ENCODE measurements at regions of chr3 and their contacts with region 1.

Region 1: DNA sequence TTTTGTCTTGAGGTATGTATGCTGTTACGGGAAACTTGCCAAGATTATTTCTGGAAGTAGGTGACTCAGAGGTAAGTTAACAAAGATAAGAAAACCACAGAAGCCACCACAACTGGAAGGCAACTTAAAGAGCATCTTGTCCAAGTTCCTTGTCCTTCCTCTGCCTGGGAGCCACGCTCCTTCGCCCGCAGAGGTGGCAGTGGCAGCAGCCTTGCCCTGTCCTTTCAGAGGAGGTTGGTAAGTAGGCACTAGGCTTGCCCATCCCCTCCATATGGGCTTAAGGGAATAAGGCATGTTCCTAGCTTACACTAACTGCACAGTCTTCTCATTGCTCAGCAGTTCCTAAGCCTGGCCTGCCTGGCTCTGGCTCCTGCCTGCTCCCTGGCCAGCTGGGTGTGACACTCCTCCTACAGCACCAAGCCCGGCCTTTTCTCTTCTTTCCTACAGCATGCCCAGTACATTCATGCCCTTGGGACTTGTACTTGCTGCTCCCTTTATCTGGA is 48.0 kb upstream of the RAB6B start:
- DNase-seq: peak; percentile 87
- H3K4me3 ChIP-seq: no peak overlapping the region
- H3K27ac ChIP-seq: peak overlapping the region; percentile 88
- H3K4me1 ChIP-seq: peaks cover 66% of the 10 kb centered on the region
- H3K27me3 ChIP-seq: no peaks in the 10 kb centered on the region
- CTCF ChIP-seq: no peak
- POLR2A ChIP-seq: peak; percentile 31

Region 2: DNA sequence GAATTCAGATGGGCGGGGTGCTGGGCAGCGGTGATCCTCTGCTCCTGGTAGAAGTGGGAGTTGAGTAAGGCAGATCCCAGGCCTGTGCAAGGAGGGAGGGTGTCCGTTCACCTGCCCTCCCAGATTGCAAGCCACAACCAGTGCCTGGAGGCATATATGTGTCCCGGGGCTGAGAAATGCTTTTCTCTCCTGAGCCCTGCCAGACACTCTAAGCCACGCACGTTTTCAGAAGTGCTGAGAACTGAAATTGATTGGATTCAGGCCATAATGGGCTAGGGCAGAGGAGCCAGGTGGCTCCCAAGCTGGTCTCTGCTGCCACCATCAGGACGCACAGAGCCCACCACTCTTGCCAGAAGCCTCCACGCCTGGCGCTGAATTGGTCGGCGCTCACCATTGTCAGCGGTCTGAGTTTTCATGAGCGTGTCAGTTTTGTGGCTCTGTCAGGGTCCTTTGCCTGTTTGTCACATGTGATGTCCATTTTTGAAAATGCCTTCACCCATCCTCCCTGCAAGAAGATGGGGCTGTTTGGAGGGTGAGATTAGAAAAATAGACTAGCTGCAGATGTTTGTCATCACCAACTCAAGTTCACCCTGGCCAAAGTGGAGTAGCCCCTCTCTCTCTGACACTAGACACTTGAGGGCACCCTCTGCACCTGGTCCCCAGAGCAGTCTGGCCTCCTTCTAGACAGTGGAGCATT is 559.2 kb before region 1 on chr3:
- CTCF ChIA-PET with region 1: no interaction called
- POLR2A ChIA-PET with region 1: no interaction called
- dilution Hi-C with region 1: no loop called
- intact Hi-C with region 1: no loop called
- DNase-seq: peak; percentile 71
- H3K4me3 ChIP-seq: no peak overlapping the region
- H3K27ac ChIP-seq: no peak overlapping the region
- H3K4me1 ChIP-seq: peaks cover 8% of the 10 kb centered on the region
- H3K27me3 ChIP-seq: peaks cover 0 to 2% of the 10 kb centered on the region in 2 experiments
- CTCF ChIP-seq: peak; percentile 93 to 96
- POLR2A ChIP-seq: no peak

Region 3: GRCh38 chr3:133910422-133910821 is 33.3 kb before region 1 on chr3:
- CTCF ChIA-PET with region 1: no interaction called
- POLR2A ChIA-PET with region 1: no interaction called
- dilution Hi-C with region 1: no loop called
- intact Hi-C with region 1: no loop called
- DNase-seq: no peak
- H3K4me3 ChIP-seq: no peak overlapping the region
- H3K27ac ChIP-seq: no peak overlapping the region
- H3K4me1 ChIP-seq: no peaks in the 10 kb centered on the region
- H3K27me3 ChIP-seq: peaks cover 3% of the 10 kb centered on the region in 2 experiments
- CTCF ChIP-seq: peak in 1 of 2 donors; percentile 6
- POLR2A ChIP-seq: no peak

Region 4: DNA sequence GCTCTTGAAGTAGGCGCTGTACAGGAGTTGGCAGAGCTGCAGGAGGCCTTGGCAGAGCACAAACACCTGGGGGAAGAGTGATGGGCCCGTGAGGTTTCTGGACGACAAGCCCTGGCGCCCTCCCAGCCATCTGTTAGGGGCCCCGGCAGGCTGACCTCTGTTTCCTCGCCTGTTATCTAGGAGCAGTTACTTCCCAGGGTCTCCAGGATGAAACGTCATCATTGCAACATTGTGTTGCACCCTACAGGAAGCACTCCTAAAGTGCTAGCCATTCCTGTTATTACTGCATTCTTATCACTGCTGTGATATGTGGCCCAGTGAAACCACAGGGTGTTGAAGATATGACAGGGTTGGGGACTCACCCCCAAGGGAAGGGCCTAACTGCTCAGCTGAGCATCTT is 35.9 kb after region 1 on chr3:
- CTCF ChIA-PET with region 1: interaction called, 3 read pairs
- POLR2A ChIA-PET with region 1: interaction called, 3 read pairs
- dilution Hi-C with region 1: no loop called
- intact Hi-C with region 1: loop called (anchors 1 kb)
- DNase-seq: peak; percentile 84
- H3K4me3 ChIP-seq: no peak overlapping the region
- H3K27ac ChIP-seq: peak overlapping the region; percentile 53
- H3K4me1 ChIP-seq: peaks cover 17% of the 10 kb centered on the region
- H3K27me3 ChIP-seq: no peaks in the 10 kb centered on the region
- CTCF ChIP-seq: no peak
- POLR2A ChIP-seq: peak; percentile 57

Region 5: GRCh38 chr3:134029734-134030378 is 86.2 kb after region 1 on chr3 and contains the start of gene SLCO2A1:
- CTCF ChIA-PET with region 1: interaction called, 3 read pairs
- POLR2A ChIA-PET with region 1: no interaction called
- dilution Hi-C with region 1: no loop called
- intact Hi-C with region 1: loop called (anchors 2 kb)
- DNase-seq: peak; percentile 23
- H3K4me3 ChIP-seq: peak within 1 kb of the TSS; percentile 8 to 66 (median 49)
- H3K27ac ChIP-seq: no peak within 1 kb of the TSS
- H3K4me1 ChIP-seq: peaks cover 18% of the 10 kb centered on the region
- H3K27me3 ChIP-seq: peaks cover 0 to 5% of the 10 kb centered on the region in 2 experiments
- CTCF ChIP-seq: no peak
- POLR2A ChIP-seq: no peak
- total RNA-seq, gene SLCO2A1: 1.4 and 2.7 TPM in 2 replicates

Region 6: DNA sequence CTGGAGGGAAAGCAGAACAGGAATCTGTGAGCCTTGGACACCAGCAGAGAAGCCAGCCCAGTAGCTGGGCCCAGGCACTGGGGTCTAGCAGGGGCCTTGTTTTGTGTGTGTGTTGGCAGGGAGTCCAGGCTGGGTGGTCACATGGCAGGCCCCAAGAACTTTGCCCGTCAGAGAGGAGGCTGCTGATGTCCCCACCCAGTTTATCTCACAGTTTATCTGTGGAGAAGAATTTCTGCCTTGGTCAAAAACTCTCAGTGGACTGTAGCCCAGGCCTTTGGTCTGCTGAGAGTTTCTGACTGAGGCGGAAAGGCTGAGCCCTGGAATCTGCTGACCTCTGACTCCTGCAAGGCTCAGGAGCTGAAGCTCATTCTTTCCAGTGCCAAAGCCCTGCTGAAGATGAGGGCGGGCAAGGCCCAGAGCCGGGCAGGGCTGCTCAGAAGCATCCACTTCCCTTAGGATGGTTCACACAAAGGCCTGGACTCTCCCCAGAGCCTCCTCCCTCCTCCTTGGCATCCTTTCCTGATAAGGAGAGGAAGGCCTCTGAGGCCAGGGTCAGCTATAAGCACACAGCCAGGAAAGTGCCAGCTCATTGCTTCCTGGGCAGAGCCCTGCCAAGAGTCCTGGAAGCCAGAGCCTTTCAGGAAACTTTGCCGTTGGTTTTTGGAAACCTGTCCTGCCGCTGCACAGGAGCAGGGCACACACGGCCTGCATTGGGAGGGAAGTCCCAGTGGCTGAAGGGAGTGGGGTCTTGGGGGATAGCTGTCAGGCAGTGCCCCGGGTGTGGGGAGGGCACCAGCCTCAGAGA is 123.2 kb after region 1 on chr3:
- CTCF ChIA-PET with region 1: interaction called, 3 read pairs
- POLR2A ChIA-PET with region 1: no interaction called
- dilution Hi-C with region 1: no loop called
- intact Hi-C with region 1: loop called (anchors 1 kb)
- DNase-seq: peak; percentile 81
- H3K4me3 ChIP-seq: no peak overlapping the region
- H3K27ac ChIP-seq: peak overlapping the region; percentile 10
- H3K4me1 ChIP-seq: peaks cover 28% of the 10 kb centered on the region
- H3K27me3 ChIP-seq: no peaks in the 10 kb centered on the region
- CTCF ChIP-seq: no peak
- POLR2A ChIP-seq: no peak

Region 7: DNA sequence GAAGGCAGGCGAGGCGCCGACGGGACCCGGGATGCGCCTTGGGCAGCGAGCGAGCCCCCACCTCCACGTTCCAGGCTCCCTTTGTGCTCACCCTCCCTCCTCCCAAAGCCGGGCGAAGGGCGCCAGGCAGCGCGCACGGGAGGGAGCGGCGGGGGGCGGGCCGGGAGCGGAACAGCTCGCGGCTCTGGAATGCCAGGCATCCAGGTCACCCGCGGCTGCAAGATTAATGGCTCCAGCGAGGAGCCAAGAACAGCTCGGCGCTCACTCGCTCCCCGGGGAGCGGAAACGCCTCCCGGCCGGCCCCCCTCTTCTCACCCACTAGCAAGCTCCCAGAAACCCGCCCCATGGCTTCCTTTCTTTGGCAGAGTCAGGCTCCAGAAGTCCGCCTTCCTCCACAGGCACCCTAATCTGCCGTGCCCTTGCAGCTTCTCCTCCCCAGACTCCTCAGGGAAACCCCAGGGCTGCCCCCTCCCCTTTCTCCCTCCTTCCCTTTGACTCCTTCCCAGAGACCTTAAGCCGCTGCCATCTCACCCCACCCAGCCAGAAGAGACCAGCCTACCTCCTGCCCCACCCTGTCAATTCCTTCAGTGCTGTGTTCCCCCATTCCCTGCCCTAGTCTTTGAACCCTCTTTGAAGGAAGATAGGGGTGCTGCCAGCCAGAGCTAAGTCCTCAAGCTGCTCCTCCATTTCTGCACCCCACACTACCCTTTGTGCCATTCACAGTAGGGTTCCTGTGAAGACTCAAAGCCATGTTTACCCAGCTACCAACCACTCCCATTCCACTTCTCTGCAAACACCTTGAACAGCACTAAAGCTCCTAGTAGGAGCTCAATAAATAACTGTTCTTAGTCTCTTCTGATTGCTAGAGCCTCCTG is 420.6 kb after region 1 on chr3:
- CTCF ChIA-PET with region 1: no interaction called
- POLR2A ChIA-PET with region 1: no interaction called
- dilution Hi-C with region 1: no loop called
- intact Hi-C with region 1: loop called (anchors 5 kb)
- DNase-seq: peak; percentile 94
- H3K4me3 ChIP-seq: no peak overlapping the region
- H3K27ac ChIP-seq: peak overlapping the region; percentile 83
- H3K4me1 ChIP-seq: peaks cover 64% of the 10 kb centered on the region
- H3K27me3 ChIP-seq: no peaks in the 10 kb centered on the region
- CTCF ChIP-seq: no peak
- POLR2A ChIP-seq: peak; percentile 76

Region 8: DNA sequence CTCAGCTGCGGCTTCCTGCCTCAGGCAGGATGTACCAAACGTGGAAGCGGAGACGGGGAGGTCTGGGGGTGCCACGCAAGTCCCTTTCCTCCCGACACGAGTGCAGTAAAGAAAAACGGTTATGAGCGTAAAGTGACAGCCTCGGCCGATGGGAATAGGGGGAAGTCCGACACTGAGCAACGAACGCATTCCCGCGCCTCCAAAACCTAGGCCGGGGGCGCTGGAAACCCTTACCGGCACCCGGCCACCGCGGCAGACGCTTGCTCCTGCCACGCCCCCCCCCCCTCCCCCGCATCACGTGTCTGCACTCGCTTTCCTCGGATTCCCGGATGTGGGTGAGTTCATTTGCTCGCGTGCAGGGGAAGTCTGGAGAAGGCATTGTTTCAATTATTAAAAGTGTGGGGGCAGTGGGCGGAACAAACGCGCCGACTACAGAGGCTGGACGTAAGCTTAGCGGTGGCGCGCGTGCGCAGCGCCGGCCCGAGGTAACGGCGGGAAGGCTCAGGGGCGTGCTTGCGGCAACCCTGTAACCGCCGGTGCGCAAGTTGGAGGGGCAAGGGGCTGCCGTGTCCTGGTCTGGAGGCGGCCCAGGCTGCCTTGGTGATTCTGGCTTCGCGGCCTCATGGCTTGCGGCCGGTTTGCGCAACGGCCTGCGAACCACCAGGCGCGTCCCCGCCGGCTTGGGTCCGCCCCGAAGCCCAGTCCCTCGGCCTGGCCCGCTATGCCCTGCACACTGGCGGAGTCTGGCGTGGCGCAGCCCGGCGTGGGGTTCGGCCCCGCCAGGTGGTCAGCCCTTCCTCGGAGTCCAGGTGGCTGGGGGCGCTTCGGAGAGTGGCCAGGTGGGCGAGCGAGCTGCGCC is 542.3 kb after region 1 on chr3 and contains the starts of genes ANAPC13 and CEP63:
- CTCF ChIA-PET with region 1: no interaction called
- POLR2A ChIA-PET with region 1: no interaction called
- dilution Hi-C with region 1: no loop called
- intact Hi-C with region 1: loop called (anchors 1 kb)
- DNase-seq: peak; percentile 99
- H3K4me3 ChIP-seq: peak within 1 kb of the TSS; percentile 75 to 88 (median 75)
- H3K27ac ChIP-seq: peak within 1 kb of the TSS; percentile 92
- H3K4me1 ChIP-seq: peaks cover 45% of the 10 kb centered on the region
- H3K27me3 ChIP-seq: no peaks in the 10 kb centered on the region
- CTCF ChIP-seq: no peak
- POLR2A ChIP-seq: peak; percentile 82
- total RNA-seq, gene ANAPC13: 50.8 and 58.6 TPM in 2 replicates
- total RNA-seq, gene CEP63: 24.9 and 29.4 TPM in 2 replicates

Region 9: DNA sequence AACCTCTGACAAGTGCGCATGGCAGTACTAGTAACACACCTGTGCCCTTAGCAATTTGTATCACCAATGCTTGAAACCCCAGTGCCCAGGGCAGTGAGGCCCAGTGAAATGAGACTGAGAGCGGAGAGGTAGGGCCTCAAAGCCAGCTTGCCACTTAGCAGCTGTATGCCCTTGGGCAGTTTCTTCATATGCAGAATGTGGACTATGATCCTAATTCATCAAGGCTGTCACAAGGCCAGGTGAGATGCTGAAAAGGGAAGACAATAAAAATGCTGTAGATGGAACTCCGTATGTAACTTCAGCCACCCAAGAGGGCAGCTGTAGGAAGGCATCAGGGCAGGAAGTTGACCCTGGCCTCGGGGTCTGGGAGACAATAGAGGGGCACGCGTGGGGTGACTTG is 632.7 kb after region 1 on chr3:
- CTCF ChIA-PET with region 1: no interaction called
- POLR2A ChIA-PET with region 1: no interaction called
- dilution Hi-C with region 1: no loop called
- intact Hi-C with region 1: no loop called
- DNase-seq: no peak
- H3K4me3 ChIP-seq: no peak overlapping the region
- H3K27ac ChIP-seq: no peak overlapping the region
- H3K4me1 ChIP-seq: no peaks in the 10 kb centered on the region
- H3K27me3 ChIP-seq: no peaks in the 10 kb centered on the region
- CTCF ChIP-seq: no peak
- POLR2A ChIP-seq: no peak